ENCODE measurements at regions of chr6 and their contacts with region 1.

Region 1: GRCh38 chr6:145963216-145964068 is 716 bp downstream of the SHPRH start:
- DNase-seq: peak; percentile 10 to 63 (median 38)
- ATAC-seq: peak; percentile 27 to 33
- H3K4me3 Mint-ChIP-seq: peak overlapping the region; percentile 95 to 100 (median 98)
- H3K27ac Mint-ChIP-seq: peak overlapping the region; percentile 89 to 100 (median 99)
- H3K4me1 Mint-ChIP-seq: peaks cover 25 to 67% (median 58%) of the 10 kb centered on the region in 4 donors
- H3K27me3 Mint-ChIP-seq: no peaks in the 10 kb centered on the region

Region 2: GRCh38 chr6:145714731-145715130 is 248.7 kb before region 1 on chr6:
- POLR2A ChIA-PET with region 1: no interaction called
- DNase-seq: no peak
- ATAC-seq: no peak
- H3K4me3 Mint-ChIP-seq: no peak overlapping the region
- H3K27ac Mint-ChIP-seq: no peak overlapping the region
- H3K4me1 Mint-ChIP-seq: peaks cover 0 to 10% (median 3%) of the 10 kb centered on the region in 4 donors
- H3K27me3 Mint-ChIP-seq: no peaks in the 10 kb centered on the region

Region 3: DNA sequence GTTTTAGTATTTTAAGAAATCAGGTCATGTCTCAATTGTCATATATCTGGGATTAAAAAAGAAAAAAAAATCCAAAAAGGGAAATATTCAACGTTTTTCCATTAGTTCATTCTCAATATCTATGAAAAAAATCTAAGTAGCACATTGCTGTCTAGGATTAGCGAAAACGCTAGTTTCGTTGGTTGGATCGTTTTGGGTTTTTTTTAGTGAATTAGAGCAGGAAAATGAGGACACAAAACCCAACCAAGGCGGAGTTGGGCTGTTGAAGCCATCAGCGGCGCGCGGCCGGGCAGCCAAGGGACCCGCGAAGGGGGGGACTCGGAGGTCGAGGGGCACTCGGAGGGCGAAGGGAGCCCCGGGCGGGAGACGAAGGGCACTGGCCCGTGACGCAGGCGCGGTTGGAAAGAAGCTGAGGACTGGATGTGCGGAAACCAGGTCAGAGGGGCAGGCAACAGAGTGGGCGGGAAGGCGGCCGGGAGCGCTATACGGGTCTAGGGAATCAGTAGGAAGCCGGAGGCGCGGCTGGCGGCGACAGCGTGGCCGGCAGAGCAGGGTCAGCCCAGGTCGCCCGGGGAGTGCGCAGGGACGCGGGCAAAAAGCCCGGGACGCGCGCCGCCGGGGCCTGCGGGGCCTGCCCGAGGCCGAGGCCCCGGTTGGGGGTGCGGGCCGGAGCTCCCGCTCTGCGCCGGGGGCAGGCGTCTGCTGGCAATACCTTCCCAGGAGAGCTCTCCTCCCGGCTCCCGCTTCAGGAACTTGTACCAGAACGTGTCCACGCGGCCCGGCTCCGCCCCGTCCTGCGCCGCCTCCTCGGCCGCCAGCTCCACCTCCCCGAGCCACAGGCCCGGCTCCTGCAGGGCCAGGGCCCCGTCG is 228.7 kb before region 1 on chr6:
- POLR2A ChIA-PET with region 1: interaction called, 46 read pairs
- DNase-seq: peak; percentile 52 to 86 (median 68)
- ATAC-seq: peak; percentile 59 to 69
- H3K4me3 Mint-ChIP-seq: peak overlapping the region; percentile 93 to 100 (median 98)
- H3K27ac Mint-ChIP-seq: peak overlapping the region; percentile 94 to 99 (median 98)
- H3K4me1 Mint-ChIP-seq: peaks cover 4 to 45% (median 23%) of the 10 kb centered on the region in 4 donors
- H3K27me3 Mint-ChIP-seq: no peaks in the 10 kb centered on the region

Region 4: DNA sequence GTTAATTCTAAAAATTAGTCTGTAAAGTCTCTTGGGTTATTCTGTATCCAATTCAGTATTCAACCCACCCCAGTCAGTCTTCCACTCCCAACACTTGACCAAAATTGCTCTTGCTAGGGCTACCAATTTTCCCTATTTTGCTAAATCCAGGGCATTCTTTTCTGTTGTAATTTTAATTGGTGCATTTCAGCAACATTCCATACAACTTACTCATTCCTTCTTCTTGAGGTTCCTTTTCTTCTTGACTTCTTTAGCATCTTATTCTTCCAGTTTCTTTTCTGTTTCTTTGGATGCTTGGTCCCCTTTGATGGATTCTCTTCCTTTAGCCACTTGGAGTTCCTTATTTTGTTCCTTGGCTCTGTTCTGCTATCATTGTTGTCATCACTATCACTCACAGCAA is 54.2 kb after region 1 on chr6:
- POLR2A ChIA-PET with region 1: no interaction called
- DNase-seq: no peak
- ATAC-seq: no peak
- H3K4me3 Mint-ChIP-seq: no peak overlapping the region
- H3K27ac Mint-ChIP-seq: peak overlapping the region in 1 of 10 donors; percentile 0
- H3K4me1 Mint-ChIP-seq: no peaks in the 10 kb centered on the region
- H3K27me3 Mint-ChIP-seq: peaks cover 9 to 30% (median 18%) of the 10 kb centered on the region in 5 donors

Region 5: DNA sequence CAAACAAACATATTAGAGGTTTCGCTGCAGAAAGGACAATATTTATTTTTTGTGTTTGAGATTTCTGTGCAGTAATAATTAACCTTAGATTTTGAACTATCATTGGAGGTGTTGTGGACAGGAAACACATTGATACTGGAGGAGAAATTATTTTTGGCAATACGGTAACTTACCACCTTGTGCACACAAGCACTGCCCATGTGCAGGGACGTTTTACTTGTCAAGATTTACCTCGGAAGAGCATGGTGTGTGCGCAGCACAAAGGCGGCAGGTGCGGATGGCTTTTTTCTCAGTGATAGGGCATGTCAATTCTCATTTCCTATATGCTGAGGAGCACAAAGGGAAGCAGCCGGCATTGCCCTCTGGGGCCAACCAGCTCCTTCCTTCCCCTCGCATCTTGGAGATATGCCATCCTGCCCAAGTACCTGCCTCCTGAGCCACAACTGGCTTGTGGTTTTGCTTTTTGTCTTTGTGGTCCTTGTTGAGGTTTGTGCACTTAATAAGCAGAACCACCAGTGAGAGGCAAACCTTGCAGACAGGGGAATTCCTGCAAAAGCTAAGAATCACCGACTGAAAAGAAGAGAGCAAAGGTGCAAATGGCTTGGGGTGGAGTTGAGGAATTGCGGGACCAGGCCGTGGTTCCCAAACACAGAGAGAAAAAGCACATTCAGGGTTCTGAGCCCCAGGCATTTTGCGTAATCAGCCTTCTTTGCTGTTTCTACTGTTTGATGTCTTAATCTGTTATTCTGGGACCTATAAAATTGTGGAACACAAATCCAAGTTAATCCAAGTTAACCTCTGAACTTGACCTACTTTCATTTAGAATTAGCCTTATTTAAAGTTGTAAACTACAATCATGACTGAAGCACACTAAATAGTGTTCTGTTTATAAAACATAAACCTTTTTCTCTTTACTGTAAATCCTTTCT is 1567.0 kb after region 1 on chr6:
- POLR2A ChIA-PET with region 1: no interaction called
- DNase-seq: peak in 2 of 10 donors; percentile 16 to 18
- ATAC-seq: peak in 1 of 2 donors; percentile 71
- H3K4me3 Mint-ChIP-seq: peak overlapping the region in 4 of 10 donors; percentile 6 to 25 (median 16)
- H3K27ac Mint-ChIP-seq: no peak overlapping the region
- H3K4me1 Mint-ChIP-seq: peaks cover 10 to 16% (median 12%) of the 10 kb centered on the region in 4 donors
- H3K27me3 Mint-ChIP-seq: peaks cover 18 to 30% (median 22%) of the 10 kb centered on the region in 5 donors